A673 (cell line): ENCODE measurements at regions of chr9 and their contacts with region 1.

Region 1: DNA sequence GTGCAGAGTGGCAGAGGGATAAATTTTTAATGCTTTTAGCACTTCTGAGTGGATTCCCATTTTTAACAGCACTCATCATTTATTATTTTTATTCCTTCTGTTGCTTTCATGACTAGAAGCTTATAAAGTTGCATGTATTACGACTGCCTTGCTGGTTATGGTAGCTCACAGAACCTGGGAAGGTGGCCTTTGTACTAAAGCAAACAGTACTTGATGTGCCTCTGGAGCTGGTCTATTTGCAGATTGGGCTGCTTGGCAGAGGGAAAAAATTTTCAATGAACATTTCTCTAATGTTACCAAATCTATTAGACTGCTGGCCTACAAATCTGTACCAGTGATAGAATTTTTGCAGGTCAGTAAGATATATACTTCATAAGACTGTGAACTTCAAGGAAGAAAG is 274.5 kb upstream of the C9orf72 start:
- DNase-seq: no peak
- H3K4me3 ChIP-seq: no peak overlapping the region
- H3K27ac ChIP-seq: no peak overlapping the region
- H3K4me1 ChIP-seq: no peaks in the 10 kb centered on the region
- H3K27me3 ChIP-seq: peaks cover 11% of the 10 kb centered on the region
- CTCF ChIP-seq: no peak

Region 2: DNA sequence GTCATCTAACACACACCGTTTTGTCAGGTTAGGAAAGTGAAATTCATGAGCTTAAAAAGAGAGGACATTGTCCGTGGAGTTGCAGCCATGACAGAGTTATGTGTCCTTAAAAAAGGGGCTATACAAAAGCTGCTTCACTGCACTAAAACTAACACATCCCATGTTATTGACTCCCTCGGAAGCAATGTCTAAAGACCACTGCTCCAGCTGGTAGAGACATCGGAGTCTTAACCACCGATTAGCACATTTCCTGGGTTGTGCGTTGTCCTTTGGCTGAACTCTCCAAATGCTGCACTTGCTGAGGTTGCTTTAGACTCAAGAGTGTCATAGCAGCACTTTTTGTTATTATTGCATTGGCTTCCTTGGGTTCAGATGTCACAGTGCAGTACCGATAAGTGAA is 146.2 kb before region 1 on chr9:
- CTCF ChIA-PET with region 1: no interaction called
- POLR2A ChIA-PET with region 1: no interaction called
- intact Hi-C with region 1: no loop called
- DNase-seq: peak; percentile 41
- H3K4me3 ChIP-seq: no peak overlapping the region
- H3K27ac ChIP-seq: no peak overlapping the region
- H3K4me1 ChIP-seq: no peaks in the 10 kb centered on the region
- H3K27me3 ChIP-seq: peaks cover 3% of the 10 kb centered on the region
- CTCF ChIP-seq: no peak

Region 3: GRCh38 chr9:27732494-27732893 is 115.3 kb before region 1 on chr9:
- CTCF ChIA-PET with region 1: interaction called, 11 read pairs
- POLR2A ChIA-PET with region 1: no interaction called
- intact Hi-C with region 1: no loop called
- DNase-seq: no peak
- H3K4me3 ChIP-seq: no peak overlapping the region
- H3K27ac ChIP-seq: no peak overlapping the region
- H3K4me1 ChIP-seq: no peaks in the 10 kb centered on the region
- H3K27me3 ChIP-seq: no peaks in the 10 kb centered on the region
- CTCF ChIP-seq: no peak

Region 4: GRCh38 chr9:27945388-27945787 is 97.6 kb after region 1 on chr9:
- CTCF ChIA-PET with region 1: no interaction called
- POLR2A ChIA-PET with region 1: no interaction called
- intact Hi-C with region 1: no loop called
- DNase-seq: no peak
- H3K4me3 ChIP-seq: no peak overlapping the region
- H3K27ac ChIP-seq: no peak overlapping the region
- H3K4me1 ChIP-seq: no peaks in the 10 kb centered on the region
- H3K27me3 ChIP-seq: no peaks in the 10 kb centered on the region
- CTCF ChIP-seq: no peak